Activated T-helper 2 cell treated with anti-CD3 and anti-CD28 coated beads, Interferon-gamma antibody, Interleukin-2, Interleukin-4, amounts not matched to agents 10 μg/mL and 5 μg/mL and 100 μg/mL, durations not matched to agents 14 hours and 24 hours and 36 hours (primary cell): ENCODE measurements at regions of chr2 and their contacts with region 1.

Region 1: GRCh38 chr2:157261199-157261783 is 3.8 kb downstream of the GALNT5 start:
- DNase-seq: peak; percentile 37
- H3K4me3 Mint-ChIP-seq: peak overlapping the region; percentile 60
- H3K27ac Mint-ChIP-seq: peak overlapping the region; percentile 88
- H3K4me1 Mint-ChIP-seq: peaks cover 52% of the 10 kb centered on the region
- H3K27me3 Mint-ChIP-seq: peaks cover 2% of the 10 kb centered on the region

Region 2: GRCh38 chr2:155377266-155377680 is 1884.0 kb before region 1 on chr2:
- intact Hi-C with region 1: loop called (anchors 5 kb)
- DNase-seq: no peak
- H3K4me3 Mint-ChIP-seq: no peak overlapping the region
- H3K27ac Mint-ChIP-seq: peak overlapping the region; percentile 73
- H3K4me1 Mint-ChIP-seq: peaks cover 17% of the 10 kb centered on the region
- H3K27me3 Mint-ChIP-seq: peaks cover 9% of the 10 kb centered on the region

Region 3: GRCh38 chr2:156476850-156477206 is 784.5 kb before region 1 on chr2:
- intact Hi-C with region 1: loop called (anchors 10 kb)
- DNase-seq: no peak
- H3K4me3 Mint-ChIP-seq: no peak overlapping the region
- H3K27ac Mint-ChIP-seq: peak overlapping the region; percentile 66
- H3K4me1 Mint-ChIP-seq: peaks cover 53% of the 10 kb centered on the region
- H3K27me3 Mint-ChIP-seq: no peaks in the 10 kb centered on the region

Region 4: GRCh38 chr2:157245846-157246764 is 15.2 kb before region 1 on chr2:
- intact Hi-C with region 1: loop called (anchors 1 kb)
- DNase-seq: no peak
- H3K4me3 Mint-ChIP-seq: no peak overlapping the region
- H3K27ac Mint-ChIP-seq: peak overlapping the region; percentile 56
- H3K4me1 Mint-ChIP-seq: peaks cover 17% of the 10 kb centered on the region
- H3K27me3 Mint-ChIP-seq: peaks cover 10% of the 10 kb centered on the region

Region 5: DNA sequence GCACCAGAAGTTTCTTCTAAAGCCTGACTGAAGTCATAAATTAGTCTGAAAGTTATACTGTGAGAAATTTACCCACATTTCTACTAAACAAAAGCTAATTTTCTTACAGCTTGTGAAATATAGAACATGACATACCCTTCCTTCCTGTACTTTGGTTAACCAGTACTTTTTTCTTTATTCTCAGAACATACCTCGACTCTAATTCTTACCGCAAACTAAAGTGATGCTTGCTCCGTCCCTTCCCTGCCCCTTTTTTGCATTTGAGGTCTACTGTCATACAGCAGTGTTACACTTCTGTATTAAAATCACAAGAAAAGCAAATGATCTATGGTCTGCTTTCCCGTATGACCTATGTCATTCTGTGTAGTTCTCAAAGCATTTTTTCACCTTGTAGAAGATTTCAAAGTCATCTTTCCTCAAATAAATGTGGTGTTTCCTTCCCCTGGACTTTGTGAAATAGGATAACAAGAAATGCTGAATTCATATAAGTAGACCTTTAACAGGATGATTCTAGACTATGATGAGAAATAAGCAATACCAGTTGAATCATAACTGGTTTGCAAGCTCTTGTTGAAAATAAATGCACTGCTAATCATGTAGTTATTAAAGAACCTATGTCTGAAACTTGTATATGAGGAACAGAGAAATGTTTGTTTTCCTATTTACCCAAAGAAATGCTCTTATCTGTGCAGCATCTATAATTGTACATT is 152.2 kb after region 1 on chr2:
- intact Hi-C with region 1: loop called (anchors 5 kb)
- DNase-seq: peak; percentile 59
- H3K4me3 Mint-ChIP-seq: peak overlapping the region; percentile 74
- H3K27ac Mint-ChIP-seq: peak overlapping the region; percentile 96
- H3K4me1 Mint-ChIP-seq: peaks cover 74% of the 10 kb centered on the region
- H3K27me3 Mint-ChIP-seq: no peaks in the 10 kb centered on the region

Region 6: GRCh38 chr2:157538064-157538463 is 276.8 kb after region 1 on chr2:
- intact Hi-C with region 1: no loop called
- DNase-seq: no peak
- H3K4me3 Mint-ChIP-seq: no peak overlapping the region
- H3K27ac Mint-ChIP-seq: no peak overlapping the region
- H3K4me1 Mint-ChIP-seq: no peaks in the 10 kb centered on the region
- H3K27me3 Mint-ChIP-seq: no peaks in the 10 kb centered on the region

Region 7: GRCh38 chr2:158191076-158191895 is 930.0 kb after region 1 on chr2:
- intact Hi-C with region 1: loop called (anchors 2 kb)
- DNase-seq: no peak
- H3K4me3 Mint-ChIP-seq: no peak overlapping the region
- H3K27ac Mint-ChIP-seq: peak overlapping the region; percentile 29
- H3K4me1 Mint-ChIP-seq: peaks cover 31% of the 10 kb centered on the region
- H3K27me3 Mint-ChIP-seq: peaks cover 27% of the 10 kb centered on the region